ENCODE measurements at regions of chr9 and their contacts with region 1.

Region 1: GRCh38 chr9:95875305-95876137 is at the start of gene ERCC6L2:
- DNase-seq: peak; percentile 92 to 97
- ATAC-seq: peak; percentile 85 to 93 (median 89)
- H3K4me3 ChIP-seq: peak within 1 kb of the TSS; percentile 95
- H3K4me3 Mint-ChIP-seq: no peak within 1 kb of the TSS
- H3K27ac ChIP-seq: no peak within 1 kb of the TSS
- H3K27ac Mint-ChIP-seq: no peak within 1 kb of the TSS
- H3K4me1 ChIP-seq: peaks cover 20% of the 10 kb centered on the region
- H3K4me1 Mint-ChIP-seq: peaks cover 9 to 16% of the 10 kb centered on the region in 2 donors
- H3K27me3 ChIP-seq: no peaks in the 10 kb centered on the region
- H3K27me3 Mint-ChIP-seq: no peaks in the 10 kb centered on the region
- CTCF ChIP-seq: no peak
- total RNA-seq, gene ERCC6L2: 37.1 to 45.8 (median 38.6) TPM

Region 2: GRCh38 chr9:95920017-95920416 is 44.5 kb after region 1 on chr9:
- intact Hi-C with region 1: no loop called
- DNase-seq: no peak
- ATAC-seq: no peak
- H3K4me3 ChIP-seq: no peak overlapping the region
- H3K4me3 Mint-ChIP-seq: no peak overlapping the region
- H3K27ac ChIP-seq: no peak overlapping the region
- H3K27ac Mint-ChIP-seq: no peak overlapping the region
- H3K4me1 ChIP-seq: no peaks in the 10 kb centered on the region
- H3K4me1 Mint-ChIP-seq: no peaks in the 10 kb centered on the region
- H3K27me3 ChIP-seq: no peaks in the 10 kb centered on the region
- H3K27me3 Mint-ChIP-seq: no peaks in the 10 kb centered on the region
- CTCF ChIP-seq: no peak

Region 3: GRCh38 chr9:96150324-96151227 is 275.1 kb after region 1 on chr9:
- intact Hi-C with region 1: loop called (anchors 5 kb)
- DNase-seq: peak; percentile 47 to 67
- ATAC-seq: peak; percentile 84 to 90 (median 86)
- H3K4me3 ChIP-seq: no peak overlapping the region
- H3K4me3 Mint-ChIP-seq: peak overlapping the region; percentile 45
- H3K27ac ChIP-seq: no peak overlapping the region
- H3K27ac Mint-ChIP-seq: peak overlapping the region in 1 of 2 donors; percentile 41
- H3K4me1 ChIP-seq: peaks cover 21% of the 10 kb centered on the region
- H3K4me1 Mint-ChIP-seq: peaks cover 15 to 25% of the 10 kb centered on the region in 2 donors
- H3K27me3 ChIP-seq: peaks cover 26% of the 10 kb centered on the region
- H3K27me3 Mint-ChIP-seq: peaks cover 26 to 35% of the 10 kb centered on the region in 2 donors
- CTCF ChIP-seq: no peak